Mammary epithelial cell (primary cell): ENCODE measurements at regions of chr1 and their contacts with region 1.

Region 1: DNA sequence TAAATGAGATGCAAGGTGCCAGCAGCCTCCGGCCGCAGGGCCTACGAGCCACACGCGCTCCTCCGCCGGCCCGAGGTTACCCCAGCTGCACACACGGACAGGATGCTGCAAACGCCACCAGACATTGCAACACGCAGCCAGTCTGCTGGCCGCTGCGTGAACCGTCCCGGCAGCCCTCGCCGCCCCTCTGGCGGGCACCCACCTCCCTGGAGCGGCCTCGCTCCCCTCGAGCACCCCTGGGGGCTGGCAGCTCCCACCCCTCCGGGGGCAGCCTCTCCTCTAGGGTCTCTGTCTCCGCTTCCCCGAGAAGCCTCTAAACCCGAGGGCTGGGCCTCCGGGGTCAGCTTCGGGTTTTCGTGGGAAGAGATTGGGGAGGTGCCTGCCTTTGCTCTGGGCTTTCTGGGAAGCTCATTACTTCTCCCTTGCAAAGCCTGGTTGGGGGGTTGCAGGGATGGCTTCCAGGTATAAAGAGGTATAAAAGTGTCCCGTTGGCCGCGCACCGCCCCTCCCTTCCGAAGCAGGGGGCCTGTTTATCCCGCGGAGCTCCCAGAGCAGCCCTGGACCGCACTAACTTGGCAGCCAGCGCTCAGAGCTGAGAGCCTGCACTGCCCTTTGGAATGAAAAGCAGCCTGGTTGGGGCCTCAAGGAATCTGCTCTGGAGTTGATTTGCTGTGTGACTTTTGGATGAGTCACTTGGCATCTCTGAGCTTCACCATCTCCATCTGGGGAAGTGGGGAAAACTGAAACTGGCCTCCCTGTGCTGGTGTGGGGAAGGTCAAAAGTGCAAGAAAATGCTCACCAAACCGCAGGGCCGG is 21.8 kb downstream of the DHRS3 start:
- DNase-seq: peak; percentile 84
- H3K4me3 ChIP-seq: peak overlapping the region in 2 of 3 experiments; percentile 6 to 10
- H3K27ac ChIP-seq: peak overlapping the region; percentile 68
- H3K4me1 ChIP-seq: peaks cover 37% of the 10 kb centered on the region
- H3K27me3 ChIP-seq: no peaks in the 10 kb centered on the region
- CTCF ChIP-seq: no peak

Region 2: DNA sequence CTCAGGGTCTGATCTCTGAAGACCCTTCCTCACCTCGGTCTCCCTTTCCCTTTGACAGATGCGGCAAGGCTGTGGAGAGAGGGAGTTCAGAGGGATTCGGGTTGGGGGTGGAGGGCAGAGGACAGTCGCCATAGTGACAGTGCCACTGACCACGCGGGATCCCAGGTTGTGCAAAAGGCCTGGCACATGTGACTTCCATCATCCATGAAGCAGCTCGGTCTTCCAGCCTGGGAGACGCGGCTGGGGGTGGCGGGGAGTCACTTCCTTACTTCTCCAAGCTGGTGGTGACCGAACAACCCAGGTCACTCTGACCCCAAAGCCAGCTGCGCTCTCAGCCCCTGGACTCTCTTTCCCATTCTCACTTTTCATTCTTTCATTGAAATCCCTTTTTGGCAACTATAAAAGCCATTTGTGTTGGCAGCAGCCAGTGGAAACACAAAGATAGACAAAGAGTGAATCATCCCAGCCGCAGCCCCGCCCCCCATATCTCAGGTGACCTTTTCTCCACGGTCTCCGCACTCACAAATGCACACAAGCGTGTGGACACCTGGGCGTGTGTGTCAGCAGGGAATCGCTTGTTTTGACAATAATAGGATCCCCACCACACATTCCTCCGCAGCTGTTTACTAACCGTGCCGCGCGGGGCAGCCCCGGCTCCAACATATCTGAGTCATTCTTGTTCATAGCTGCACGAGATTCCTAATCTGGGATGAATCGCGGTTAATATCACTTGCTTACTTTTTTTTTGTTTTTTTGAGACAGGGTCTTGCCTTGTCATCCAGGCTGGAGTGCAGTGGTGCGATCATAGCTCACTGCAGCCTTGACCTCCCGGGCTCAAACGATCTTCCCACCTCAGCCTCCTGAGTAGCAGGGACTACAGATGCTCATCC is 46.5 kb before region 1 on chr1:
- CTCF ChIA-PET with region 1: no interaction called
- dilution Hi-C with region 1: no loop called
- in situ Hi-C with region 1: no loop called
- intact Hi-C with region 1: loop called (anchors 2 kb)
- DNase-seq: peak; percentile 97
- H3K4me3 ChIP-seq: peak overlapping the region in 1 of 3 experiments; percentile 8
- H3K27ac ChIP-seq: peak overlapping the region; percentile 47
- H3K4me1 ChIP-seq: peaks cover 15% of the 10 kb centered on the region
- H3K27me3 ChIP-seq: peaks cover 7% of the 10 kb centered on the region
- CTCF ChIP-seq: no peak

Region 3: GRCh38 chr1:12630946-12631530 is 34.8 kb after region 1 on chr1:
- CTCF ChIA-PET with region 1: no interaction called
- dilution Hi-C with region 1: no loop called
- in situ Hi-C with region 1: no loop called
- intact Hi-C with region 1: no loop called
- DNase-seq: no peak
- H3K4me3 ChIP-seq: no peak overlapping the region
- H3K27ac ChIP-seq: no peak overlapping the region
- H3K4me1 ChIP-seq: no peaks in the 10 kb centered on the region
- H3K27me3 ChIP-seq: no peaks in the 10 kb centered on the region
- CTCF ChIP-seq: no peak